BJ (cell line): ENCODE measurements at regions of chr5 and their contacts with region 1.

Region 1: GRCh38 chr5:36739751-36740221 is 133.4 kb downstream of the SLC1A3 start:
- DNase-seq: no peak
- H3K4me3 ChIP-seq: no peak overlapping the region
- H3K27me3 ChIP-seq: peaks cover 6% of the 10 kb centered on the region
- CTCF ChIP-seq: peak; percentile 80

Region 2: DNA sequence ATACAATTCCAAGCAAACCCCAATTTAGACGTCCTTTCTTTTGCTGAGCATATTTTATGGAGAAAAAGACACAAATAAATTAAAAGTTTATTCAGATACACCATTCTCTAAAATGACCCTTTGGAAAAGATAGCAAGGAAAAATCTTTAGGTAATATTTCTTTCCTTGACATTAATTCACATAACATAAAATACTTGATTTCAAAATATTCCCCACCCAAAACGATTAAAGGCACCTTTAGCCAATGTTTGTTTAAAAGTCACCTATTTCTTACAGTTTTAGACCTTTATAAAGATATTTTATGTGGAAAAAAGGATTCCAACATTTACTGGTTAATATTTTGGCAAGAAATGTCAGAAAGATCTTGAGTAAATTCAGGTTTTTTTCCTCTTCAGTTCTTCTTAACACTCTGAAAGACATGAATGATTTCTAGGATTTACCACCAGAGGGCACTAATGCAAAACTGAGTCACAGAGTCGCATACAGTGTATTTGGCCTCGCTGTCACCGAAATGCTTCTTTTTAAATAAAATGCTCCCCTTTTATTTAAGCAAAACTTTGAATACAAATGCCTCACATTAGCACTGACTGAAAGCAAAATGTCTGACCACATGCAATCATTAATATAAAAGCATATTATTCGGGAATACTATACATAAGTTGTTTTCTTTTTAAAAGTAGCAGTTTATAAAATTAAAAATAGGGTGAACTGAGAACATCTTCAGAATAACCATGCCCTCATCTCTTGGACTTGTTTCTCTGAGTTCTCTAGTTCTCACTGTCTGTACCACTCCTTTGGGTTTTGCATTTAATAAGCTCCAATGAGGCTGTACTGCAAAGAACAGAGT is 10.9 kb before region 1 on chr5:
- CTCF ChIA-PET with region 1: interaction called, 31 read pairs
- POLR2A ChIA-PET with region 1: interaction called, 9 read pairs
- DNase-seq: no peak
- H3K4me3 ChIP-seq: no peak overlapping the region
- H3K27me3 ChIP-seq: peaks cover 2% of the 10 kb centered on the region; the same call in 1 of the 2 replicates
- CTCF ChIP-seq: peak; percentile 66

Region 3: DNA sequence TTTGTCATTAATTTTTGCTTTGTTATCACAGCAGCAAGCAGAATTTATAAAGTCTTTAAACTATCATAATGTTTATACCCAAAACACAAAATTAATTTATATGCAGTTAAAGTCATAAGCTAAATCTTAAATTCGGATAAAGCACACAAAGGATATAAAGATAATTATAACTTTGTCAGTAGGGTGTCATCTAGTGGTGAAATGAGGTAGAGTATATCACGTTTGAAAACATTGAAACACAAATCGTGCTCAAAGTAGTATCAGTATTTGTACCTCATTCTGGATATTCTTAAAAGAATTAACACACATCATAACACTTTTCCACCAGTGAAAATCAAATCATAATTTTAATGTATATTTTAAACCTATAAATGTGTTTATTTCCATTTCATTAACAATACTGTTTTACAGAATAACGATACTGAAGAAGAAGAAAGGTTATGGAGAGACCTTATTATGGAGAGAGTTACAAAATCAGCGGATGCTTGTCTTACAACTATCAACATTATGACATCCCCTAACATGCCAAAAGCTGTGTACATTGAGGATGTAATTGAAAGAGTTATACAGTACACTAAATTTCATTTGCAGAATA is 266.3 kb after region 1 on chr5:
- CTCF ChIA-PET with region 1: interaction called, 20 read pairs
- POLR2A ChIA-PET with region 1: no interaction called
- DNase-seq: no peak
- H3K4me3 ChIP-seq: no peak overlapping the region
- H3K27me3 ChIP-seq: no peaks in the 10 kb centered on the region
- CTCF ChIP-seq: peak; percentile 62